Activated CD8-positive, alpha-beta T cell treated with anti-CD3 and anti-CD28 coated beads for 36 hours (primary cell): ENCODE measurements at regions of chr2 and their contacts with region 1.

Region 1: DNA sequence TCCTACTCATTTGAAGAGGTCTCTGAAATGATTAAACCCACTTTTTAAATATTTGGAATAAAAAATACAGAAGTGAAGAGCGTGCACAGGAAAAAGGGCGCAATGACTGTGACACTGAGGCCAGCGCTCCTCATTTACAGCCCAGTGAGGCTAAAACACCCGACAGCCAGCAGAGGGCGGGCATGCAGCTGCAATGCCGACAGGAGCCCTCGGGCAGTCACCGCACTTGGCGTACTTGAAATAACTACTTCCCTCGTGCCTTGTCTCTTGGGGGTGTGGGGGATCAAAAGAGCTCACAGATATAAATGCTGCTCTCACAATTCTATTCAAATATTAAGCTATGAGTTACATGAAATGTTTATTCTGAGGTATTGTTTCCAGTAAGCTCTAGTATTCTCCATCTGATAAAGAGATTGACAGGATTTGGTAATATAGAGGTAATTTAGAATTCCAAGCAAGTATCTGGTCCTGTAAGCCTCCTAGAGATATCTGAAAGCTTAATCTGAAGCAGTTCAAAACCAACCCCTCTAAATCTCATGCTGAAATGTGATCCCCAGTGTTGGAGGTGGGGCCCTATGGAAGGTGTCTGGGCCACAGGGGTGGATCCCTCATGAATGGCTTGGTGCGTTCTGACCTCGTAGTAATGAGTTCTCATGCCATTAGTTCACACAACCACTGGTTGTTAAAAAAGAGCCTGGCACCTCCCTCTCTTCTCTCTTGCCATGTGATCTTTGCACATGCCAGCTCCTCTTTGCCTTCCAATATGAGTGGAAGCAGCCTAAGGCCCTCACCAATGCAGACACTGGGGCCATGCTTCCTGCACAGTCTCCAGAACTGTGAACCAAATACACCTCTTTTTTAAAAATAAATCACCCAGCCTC is 93.6 kb downstream of the ZAP70 start:
- DNase-seq: peak; percentile 90
- ATAC-seq: peak; percentile 98
- H3K4me3 Mint-ChIP-seq: no peak overlapping the region
- H3K27ac Mint-ChIP-seq: no peak overlapping the region
- H3K4me1 Mint-ChIP-seq: peaks cover 3% of the 10 kb centered on the region
- H3K27me3 Mint-ChIP-seq: no peaks in the 10 kb centered on the region
- CTCF ChIP-seq: peak; percentile 94

Region 2: DNA sequence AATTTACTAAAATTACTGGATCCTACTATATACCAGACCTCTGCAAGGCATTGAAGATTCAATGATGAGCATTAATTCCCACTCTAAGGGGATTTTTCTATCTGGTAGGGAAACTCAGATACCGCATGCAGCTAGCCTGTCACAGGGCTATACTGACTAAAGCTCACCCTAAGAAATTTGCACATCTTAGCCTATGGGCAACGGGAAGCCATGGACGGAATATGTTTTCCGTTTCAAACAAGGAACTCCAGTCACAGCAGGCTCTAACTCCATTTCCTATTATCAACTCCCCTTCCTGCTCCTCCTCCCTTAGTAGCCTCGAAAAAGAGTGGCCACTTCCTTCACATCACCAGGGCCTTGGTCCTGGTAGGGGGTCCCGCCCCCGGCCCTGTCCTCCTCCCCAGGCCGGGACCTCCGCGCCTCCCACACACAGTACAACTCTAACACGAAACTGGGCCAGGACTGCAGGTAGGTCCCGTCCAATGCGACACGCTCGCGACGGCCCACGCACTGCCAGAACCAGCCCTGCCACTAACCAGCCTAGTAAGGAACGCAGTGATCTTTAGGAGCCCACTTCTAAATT is 161.8 kb before region 1 on chr2:
- CTCF ChIA-PET with region 1: no interaction called
- POLR2A ChIA-PET with region 1: no interaction called
- intact Hi-C with region 1: no loop called
- DNase-seq: no peak
- ATAC-seq: peak; percentile 46
- H3K4me3 Mint-ChIP-seq: peak overlapping the region; percentile 90
- H3K27ac Mint-ChIP-seq: peak overlapping the region; percentile 98
- H3K4me1 Mint-ChIP-seq: peaks cover 15% of the 10 kb centered on the region
- H3K27me3 Mint-ChIP-seq: no peaks in the 10 kb centered on the region
- CTCF ChIP-seq: no peak

Region 3: DNA sequence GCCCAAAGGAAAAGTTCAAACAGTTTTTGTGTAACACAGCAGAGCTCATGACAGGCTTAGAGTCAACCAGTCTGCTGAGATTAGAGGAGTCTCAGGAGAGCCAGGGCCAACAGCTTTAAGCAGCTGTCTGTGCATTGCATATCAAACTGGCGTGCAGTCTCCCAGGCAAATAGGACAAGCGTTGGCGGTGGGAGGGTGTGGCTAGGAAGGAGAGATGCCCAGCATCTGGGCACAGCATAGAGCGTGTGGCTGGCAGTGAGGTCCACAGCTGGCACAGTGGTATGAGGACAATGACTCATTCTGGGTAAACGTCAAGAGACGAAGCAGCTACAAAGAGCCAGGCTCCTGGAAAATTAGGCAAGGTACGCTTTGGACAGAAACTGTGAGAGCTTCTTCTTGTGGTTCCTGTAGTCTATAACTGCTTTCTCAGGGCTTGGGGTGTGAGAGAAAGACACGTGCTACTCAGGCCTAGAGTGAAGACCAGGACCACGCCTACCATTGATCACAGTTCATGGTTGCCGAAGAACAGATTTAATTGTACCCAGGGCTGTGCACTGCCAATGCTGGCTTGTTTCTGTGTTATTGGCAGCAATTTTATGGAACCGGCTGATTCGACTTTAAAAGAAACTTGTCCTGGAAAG is 78.8 kb before region 1 on chr2:
- CTCF ChIA-PET with region 1: no interaction called
- POLR2A ChIA-PET with region 1: no interaction called
- intact Hi-C with region 1: no loop called
- DNase-seq: peak; percentile 63
- ATAC-seq: peak; percentile 78
- H3K4me3 Mint-ChIP-seq: no peak overlapping the region
- H3K27ac Mint-ChIP-seq: peak overlapping the region; percentile 86
- H3K4me1 Mint-ChIP-seq: peaks cover 68% of the 10 kb centered on the region
- H3K27me3 Mint-ChIP-seq: no peaks in the 10 kb centered on the region
- CTCF ChIP-seq: no peak

Region 4: GRCh38 chr2:97788986-97789644 is 17.9 kb before region 1 on chr2:
- CTCF ChIA-PET with region 1: interaction called, 14 read pairs
- POLR2A ChIA-PET with region 1: no interaction called
- intact Hi-C with region 1: no loop called
- DNase-seq: no peak
- ATAC-seq: no peak
- H3K4me3 Mint-ChIP-seq: no peak overlapping the region
- H3K27ac Mint-ChIP-seq: no peak overlapping the region
- H3K4me1 Mint-ChIP-seq: no peaks in the 10 kb centered on the region
- H3K27me3 Mint-ChIP-seq: no peaks in the 10 kb centered on the region
- CTCF ChIP-seq: no peak

Region 5: GRCh38 chr2:97870396-97870843 is 63.4 kb after region 1 on chr2:
- CTCF ChIA-PET with region 1: interaction called, 11 read pairs
- POLR2A ChIA-PET with region 1: no interaction called
- intact Hi-C with region 1: no loop called
- DNase-seq: peak; percentile 77
- ATAC-seq: peak; percentile 99
- H3K4me3 Mint-ChIP-seq: no peak overlapping the region
- H3K27ac Mint-ChIP-seq: peak overlapping the region; percentile 21
- H3K4me1 Mint-ChIP-seq: peaks cover 46% of the 10 kb centered on the region
- H3K27me3 Mint-ChIP-seq: no peaks in the 10 kb centered on the region
- CTCF ChIP-seq: no peak

Region 6: GRCh38 chr2:98188351-98189049 is 381.5 kb after region 1 on chr2:
- CTCF ChIA-PET with region 1: interaction called, 11 read pairs
- POLR2A ChIA-PET with region 1: no interaction called
- intact Hi-C with region 1: loop called (anchors 10 kb)
- DNase-seq: no peak
- ATAC-seq: no peak
- H3K4me3 Mint-ChIP-seq: no peak overlapping the region
- H3K27ac Mint-ChIP-seq: no peak overlapping the region
- H3K4me1 Mint-ChIP-seq: no peaks in the 10 kb centered on the region
- H3K27me3 Mint-ChIP-seq: peaks cover 5% of the 10 kb centered on the region
- CTCF ChIP-seq: no peak

Region 7: DNA sequence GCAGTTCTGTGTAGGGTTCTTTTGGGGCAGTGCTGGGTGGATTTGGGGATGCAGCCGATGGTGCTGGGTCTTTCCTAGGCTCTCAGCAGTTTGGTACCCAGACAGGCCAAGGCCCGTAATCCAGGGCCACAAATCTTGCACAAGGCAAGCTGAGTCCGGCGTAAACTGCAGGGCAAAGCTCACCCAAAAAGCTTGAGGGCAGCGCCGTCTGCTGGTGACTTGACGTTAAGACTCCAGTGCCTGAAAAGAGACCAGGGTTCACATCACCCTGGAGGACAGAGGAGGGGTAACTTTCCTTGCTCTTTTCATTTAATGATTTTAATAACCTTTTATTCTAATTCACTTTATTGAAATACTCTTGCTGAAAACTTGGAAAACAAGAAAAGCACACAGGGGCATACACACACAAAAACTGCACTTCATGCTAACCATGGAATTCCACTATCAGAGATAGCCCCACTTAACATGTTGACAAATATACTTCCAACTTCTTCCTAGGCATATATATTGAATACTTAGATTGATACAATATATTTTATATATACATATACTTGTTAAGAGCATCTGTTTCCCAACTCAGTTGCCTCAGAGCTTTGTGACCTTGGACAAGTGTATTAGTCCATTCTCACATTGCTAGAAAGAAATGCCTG is 578.2 kb after region 1 on chr2:
- CTCF ChIA-PET with region 1: interaction called, 20 read pairs
- POLR2A ChIA-PET with region 1: no interaction called
- intact Hi-C with region 1: loop called (anchors 5 kb)
- DNase-seq: peak; percentile 85
- ATAC-seq: peak; percentile 84
- H3K4me3 Mint-ChIP-seq: no peak overlapping the region
- H3K27ac Mint-ChIP-seq: no peak overlapping the region
- H3K4me1 Mint-ChIP-seq: no peaks in the 10 kb centered on the region
- H3K27me3 Mint-ChIP-seq: peaks cover 4% of the 10 kb centered on the region
- CTCF ChIP-seq: peak; percentile 96